Mammary epithelial cell (primary cell): ENCODE measurements at regions of chr1 and their contacts with region 1.

Region 1: GRCh38 chr1:84869720-84870119 is 23.3 kb downstream of the LPAR3 start:
- DNase-seq: peak; percentile 26
- H3K4me3 ChIP-seq: no peak overlapping the region
- H3K27ac ChIP-seq: no peak overlapping the region
- H3K4me1 ChIP-seq: peaks cover 3% of the 10 kb centered on the region
- H3K27me3 ChIP-seq: no peaks in the 10 kb centered on the region
- CTCF ChIP-seq: no peak

Region 2: GRCh38 chr1:84780000-84780716 is 89.6 kb before region 1 on chr1:
- CTCF ChIA-PET with region 1: no interaction called
- dilution Hi-C with region 1: loop called (anchors 5 kb)
- in situ Hi-C with region 1: no loop called
- intact Hi-C with region 1: no loop called
- DNase-seq: peak; percentile 76
- H3K4me3 ChIP-seq: no peak overlapping the region
- H3K27ac ChIP-seq: no peak overlapping the region
- H3K4me1 ChIP-seq: peaks cover 15% of the 10 kb centered on the region
- H3K27me3 ChIP-seq: no peaks in the 10 kb centered on the region
- CTCF ChIP-seq: no peak

Region 3: DNA sequence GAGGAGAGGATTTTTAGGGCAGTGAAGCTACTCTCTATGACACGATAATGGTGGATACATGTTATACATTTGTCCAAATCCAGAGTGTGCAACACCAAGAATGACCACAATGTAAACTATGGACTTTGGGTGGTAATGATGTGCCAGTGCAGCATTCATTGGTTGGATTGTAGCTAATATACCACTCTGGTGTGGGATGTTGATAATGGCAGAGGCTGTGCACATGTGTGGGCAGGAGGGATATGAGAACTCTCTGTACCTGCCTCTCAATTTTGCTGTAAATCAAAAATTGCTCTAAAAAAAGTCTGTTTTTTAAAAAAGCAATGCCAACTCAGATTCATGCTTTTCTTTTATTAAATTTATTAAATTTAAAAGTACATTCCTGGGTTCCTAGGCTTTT is 50.4 kb after region 1 on chr1:
- CTCF ChIA-PET with region 1: no interaction called
- dilution Hi-C with region 1: loop called (anchors 5 kb)
- in situ Hi-C with region 1: no loop called
- intact Hi-C with region 1: no loop called
- DNase-seq: no peak
- H3K4me3 ChIP-seq: no peak overlapping the region
- H3K27ac ChIP-seq: no peak overlapping the region
- H3K4me1 ChIP-seq: no peaks in the 10 kb centered on the region
- H3K27me3 ChIP-seq: no peaks in the 10 kb centered on the region
- CTCF ChIP-seq: no peak